IMR-90 (cell line): ENCODE measurements at regions of chrX and their contacts with region 1.

Region 1: GRCh38 chrX:73855546-73855945 is 292.5 kb downstream of the CHIC1 start:
- DNase-seq: peak; percentile 70
- ATAC-seq: peak; percentile 22
- H3K4me3 ChIP-seq: no peak overlapping the region
- H3K27ac ChIP-seq: no peak overlapping the region
- H3K4me1 ChIP-seq: no peaks in the 10 kb centered on the region
- H3K27me3 ChIP-seq: peaks cover under 1% of the 10 kb centered on the region; the same call in 1 of the 2 replicates
- CTCF ChIP-seq: peak; percentile 92
- POLR2A ChIP-seq: no peak
- RAD21 ChIP-seq: peak; percentile 93

Region 2: DNA sequence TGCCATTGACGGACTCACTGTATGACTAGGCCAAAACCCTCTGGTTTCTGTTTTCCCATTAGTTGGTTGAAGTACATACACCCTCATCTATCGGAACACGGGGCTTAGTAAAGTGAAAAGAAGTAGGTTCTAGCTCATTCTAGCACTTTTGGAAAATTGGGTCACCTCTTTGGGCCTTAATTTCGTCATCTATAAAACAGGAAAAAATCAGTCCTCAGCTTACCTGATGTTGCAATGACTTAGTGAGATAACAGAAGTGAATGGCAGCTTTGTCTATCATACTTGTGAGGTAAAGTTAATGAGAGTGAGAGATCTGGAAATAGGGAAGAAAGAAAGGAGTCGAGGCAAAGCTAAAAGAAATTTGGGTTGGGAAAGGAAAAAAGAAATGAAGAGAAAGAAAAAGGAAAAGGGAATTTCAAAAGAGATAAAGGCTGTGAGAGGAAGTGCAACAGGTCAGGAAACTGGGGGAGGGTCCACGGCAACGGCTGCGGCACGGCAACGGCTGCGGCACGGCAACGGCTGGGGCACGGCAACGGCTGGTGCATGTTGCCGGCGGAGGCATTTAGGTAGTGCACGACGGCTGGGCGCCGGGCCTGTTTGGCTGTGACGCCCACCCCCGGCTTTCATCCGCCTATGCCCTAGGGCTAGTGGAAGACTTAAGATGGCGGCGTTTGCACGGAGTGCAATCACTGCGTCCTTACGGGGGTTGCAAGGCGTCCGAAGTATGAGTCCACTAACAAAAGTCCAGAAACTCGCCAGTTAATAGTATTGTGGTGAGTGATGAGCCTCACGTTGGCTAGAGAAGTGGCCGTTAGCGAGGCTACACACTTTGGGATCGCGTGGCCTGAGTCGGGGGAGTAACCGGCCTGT is 88.4 kb after region 1 on chrX:
- CTCF ChIA-PET with region 1: no interaction called
- POLR2A ChIA-PET with region 1: no interaction called
- dilution Hi-C with region 1: no loop called
- in situ Hi-C with region 1: no loop called
- intact Hi-C with region 1: loop called (anchors 1 kb)
- DNase-seq: peak; percentile 91
- ATAC-seq: peak; percentile 100
- H3K4me3 ChIP-seq: peak overlapping the region; percentile 92
- H3K27ac ChIP-seq: peak overlapping the region; percentile 91
- H3K4me1 ChIP-seq: peaks cover 2% of the 10 kb centered on the region; the same call in 1 of the 2 replicates
- H3K27me3 ChIP-seq: no peaks in the 10 kb centered on the region
- CTCF ChIP-seq: no peak
- POLR2A ChIP-seq: peak; percentile 85
- RAD21 ChIP-seq: no peak

Region 3: DNA sequence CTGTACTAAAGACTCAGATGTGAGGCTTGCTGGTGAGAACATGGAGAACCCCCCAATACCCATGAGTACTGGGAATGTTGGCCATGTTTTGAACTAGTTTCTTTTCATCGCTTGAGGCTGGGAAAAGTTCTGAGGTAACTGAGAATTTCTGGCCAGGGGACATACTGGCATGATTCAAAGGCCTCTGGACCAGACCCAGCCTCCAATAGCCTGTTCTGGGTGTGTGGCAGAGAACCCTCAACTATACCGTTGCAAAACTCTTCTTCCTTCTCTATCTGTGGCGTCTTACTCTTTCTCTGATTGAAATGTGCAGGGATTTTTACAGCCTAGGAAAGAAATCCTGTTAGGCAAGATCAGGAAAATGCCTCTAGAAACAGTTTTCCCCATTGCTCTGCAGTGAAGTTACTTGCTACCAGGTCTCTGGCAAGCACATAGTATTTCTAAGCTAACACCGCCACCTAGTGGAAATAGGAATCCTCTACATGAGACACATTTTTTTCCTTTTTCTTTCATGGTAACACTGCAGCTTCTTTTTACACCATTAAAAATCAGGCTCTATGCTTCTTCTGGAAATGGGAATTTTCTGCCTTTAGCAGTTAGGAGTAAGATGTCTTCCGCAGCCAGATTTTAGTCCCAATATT is 277.7 kb after region 1 on chrX:
- CTCF ChIA-PET with region 1: no interaction called
- POLR2A ChIA-PET with region 1: no interaction called
- dilution Hi-C with region 1: no loop called
- in situ Hi-C with region 1: loop called (anchors 5 kb)
- intact Hi-C with region 1: loop called (anchors 1 kb)
- DNase-seq: peak; percentile 80
- ATAC-seq: peak; percentile 99
- H3K4me3 ChIP-seq: no peak overlapping the region
- H3K27ac ChIP-seq: no peak overlapping the region
- H3K4me1 ChIP-seq: no peaks in the 10 kb centered on the region
- H3K27me3 ChIP-seq: peaks cover 2% of the 10 kb centered on the region; the same call in 1 of the 2 replicates
- CTCF ChIP-seq: peak; percentile 88
- POLR2A ChIP-seq: no peak
- RAD21 ChIP-seq: peak; percentile 89

Region 4: GRCh38 chrX:74382613-74383012 is 527.1 kb after region 1 on chrX:
- CTCF ChIA-PET with region 1: interaction called, 4 read pairs
- POLR2A ChIA-PET with region 1: no interaction called
- dilution Hi-C with region 1: no loop called
- in situ Hi-C with region 1: no loop called
- intact Hi-C with region 1: loop called (anchors 1 kb)
- DNase-seq: peak; percentile 66
- ATAC-seq: peak; percentile 89
- H3K4me3 ChIP-seq: no peak overlapping the region
- H3K27ac ChIP-seq: no peak overlapping the region
- H3K4me1 ChIP-seq: no peaks in the 10 kb centered on the region
- H3K27me3 ChIP-seq: peaks cover 3% of the 10 kb centered on the region
- CTCF ChIP-seq: peak; percentile 68
- POLR2A ChIP-seq: no peak
- RAD21 ChIP-seq: peak; percentile 59

Region 5: DNA sequence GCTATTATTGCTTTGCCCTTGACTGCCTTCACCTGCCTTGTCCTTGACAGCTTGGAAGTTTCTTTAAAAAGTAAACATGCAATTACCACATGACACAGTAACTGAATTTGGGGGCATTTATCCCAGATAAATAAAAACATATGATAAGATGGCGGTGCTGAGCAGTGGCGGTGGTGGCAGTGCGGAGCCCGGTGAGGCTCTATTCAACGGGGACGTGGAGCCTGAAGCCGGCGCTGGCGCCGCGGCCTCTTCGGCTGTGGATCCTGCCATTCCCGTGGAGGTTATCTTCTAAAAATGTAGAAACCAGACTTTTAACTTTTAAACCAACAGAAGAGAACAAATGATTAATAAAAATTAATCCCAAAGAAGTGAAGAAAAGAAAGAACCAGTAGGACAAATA is 1727.0 kb after region 1 on chrX:
- CTCF ChIA-PET with region 1: no interaction called
- POLR2A ChIA-PET with region 1: no interaction called
- dilution Hi-C with region 1: no loop called
- in situ Hi-C with region 1: no loop called
- intact Hi-C with region 1: no loop called
- DNase-seq: no peak
- ATAC-seq: no peak
- H3K4me3 ChIP-seq: no peak overlapping the region
- H3K27ac ChIP-seq: no peak overlapping the region
- H3K4me1 ChIP-seq: no peaks in the 10 kb centered on the region
- H3K27me3 ChIP-seq: no peaks in the 10 kb centered on the region
- CTCF ChIP-seq: no peak
- POLR2A ChIP-seq: no peak
- RAD21 ChIP-seq: no peak

Region 6: DNA sequence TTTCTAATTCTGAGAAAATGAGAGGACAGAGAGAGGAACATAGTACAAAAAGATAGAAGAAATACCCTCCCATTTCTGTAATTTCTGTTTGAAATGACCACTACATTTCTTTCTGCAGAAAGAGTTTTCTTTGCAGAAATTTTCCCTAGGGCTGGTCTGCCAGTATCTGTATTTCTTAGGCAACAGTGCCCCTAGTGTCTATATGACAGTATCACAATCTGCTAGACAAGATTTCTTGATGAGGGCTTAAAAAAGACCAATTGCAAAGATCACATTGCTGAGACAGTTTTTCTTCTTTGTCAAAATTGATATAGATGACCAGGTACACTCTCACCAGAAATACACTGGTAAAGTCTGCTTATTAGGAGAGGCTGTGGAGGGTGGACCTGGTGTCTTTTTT is 1748.3 kb after region 1 on chrX:
- CTCF ChIA-PET with region 1: no interaction called
- POLR2A ChIA-PET with region 1: no interaction called
- dilution Hi-C with region 1: no loop called
- in situ Hi-C with region 1: no loop called
- intact Hi-C with region 1: loop called (anchors 10 kb)
- DNase-seq: peak; percentile 28
- ATAC-seq: peak; percentile 64; the same call in 1 of the 2 replicates
- H3K4me3 ChIP-seq: no peak overlapping the region
- H3K27ac ChIP-seq: no peak overlapping the region
- H3K4me1 ChIP-seq: no peaks in the 10 kb centered on the region
- H3K27me3 ChIP-seq: no peaks in the 10 kb centered on the region
- CTCF ChIP-seq: peak; percentile 52
- POLR2A ChIP-seq: no peak
- RAD21 ChIP-seq: peak; percentile 60